Activated CD4-positive, alpha-beta memory T cell treated with anti-CD3 and anti-CD28 coated beads, Interleukin-2, amount 10 ng/mL, durations not matched to agents 7 days and 5 days (primary cell): ENCODE measurements at regions of chr2 and their contacts with region 1.

Region 1: DNA sequence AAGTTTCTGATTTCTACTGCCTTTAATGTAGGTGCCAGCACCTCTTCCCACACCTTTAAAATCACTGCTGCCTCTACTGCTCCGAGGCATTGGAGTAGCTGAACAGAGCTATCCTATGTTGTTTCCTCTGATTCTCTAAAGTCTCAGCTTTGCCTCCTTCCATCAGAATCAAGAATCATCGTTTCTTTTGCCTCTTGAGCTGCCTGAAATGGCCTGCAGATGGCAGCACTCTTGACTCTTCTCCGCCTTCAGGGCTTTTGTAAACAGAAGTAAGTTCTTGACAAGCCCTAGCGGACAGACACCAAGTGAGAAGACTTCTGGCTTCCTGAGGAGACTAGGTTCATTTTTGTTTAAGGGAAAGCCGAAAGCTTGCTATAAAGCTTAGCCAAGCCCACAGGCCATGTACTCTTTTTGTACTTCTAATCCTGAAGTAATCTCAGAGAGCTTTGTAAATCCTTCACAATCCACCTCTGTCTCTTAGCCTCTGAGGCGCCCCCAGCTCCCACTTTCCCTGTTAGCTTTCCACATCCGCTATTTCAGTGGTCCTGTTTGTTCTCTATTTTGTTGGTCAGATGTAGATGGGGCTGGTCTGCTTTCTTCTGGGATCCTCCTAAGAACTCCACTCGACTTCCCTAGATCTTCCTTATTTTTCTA is 48.4 kb downstream of the GTF3C3 start:
- DNase-seq: peak; percentile 76
- H3K4me3 Mint-ChIP-seq: no peak overlapping the region
- H3K27ac Mint-ChIP-seq: no peak overlapping the region
- H3K4me1 Mint-ChIP-seq: peaks cover 24% of the 10 kb centered on the region
- H3K27me3 Mint-ChIP-seq: peaks cover 3% of the 10 kb centered on the region

Region 2: GRCh38 chr2:196767101-196767500 is 16.0 kb after region 1 on chr2:
- CTCF ChIA-PET with region 1: interaction called, 13 read pairs
- POLR2A ChIA-PET with region 1: no interaction called
- DNase-seq: no peak
- H3K4me3 Mint-ChIP-seq: no peak overlapping the region
- H3K27ac Mint-ChIP-seq: no peak overlapping the region
- H3K4me1 Mint-ChIP-seq: no peaks in the 10 kb centered on the region
- H3K27me3 Mint-ChIP-seq: no peaks in the 10 kb centered on the region

Region 3: DNA sequence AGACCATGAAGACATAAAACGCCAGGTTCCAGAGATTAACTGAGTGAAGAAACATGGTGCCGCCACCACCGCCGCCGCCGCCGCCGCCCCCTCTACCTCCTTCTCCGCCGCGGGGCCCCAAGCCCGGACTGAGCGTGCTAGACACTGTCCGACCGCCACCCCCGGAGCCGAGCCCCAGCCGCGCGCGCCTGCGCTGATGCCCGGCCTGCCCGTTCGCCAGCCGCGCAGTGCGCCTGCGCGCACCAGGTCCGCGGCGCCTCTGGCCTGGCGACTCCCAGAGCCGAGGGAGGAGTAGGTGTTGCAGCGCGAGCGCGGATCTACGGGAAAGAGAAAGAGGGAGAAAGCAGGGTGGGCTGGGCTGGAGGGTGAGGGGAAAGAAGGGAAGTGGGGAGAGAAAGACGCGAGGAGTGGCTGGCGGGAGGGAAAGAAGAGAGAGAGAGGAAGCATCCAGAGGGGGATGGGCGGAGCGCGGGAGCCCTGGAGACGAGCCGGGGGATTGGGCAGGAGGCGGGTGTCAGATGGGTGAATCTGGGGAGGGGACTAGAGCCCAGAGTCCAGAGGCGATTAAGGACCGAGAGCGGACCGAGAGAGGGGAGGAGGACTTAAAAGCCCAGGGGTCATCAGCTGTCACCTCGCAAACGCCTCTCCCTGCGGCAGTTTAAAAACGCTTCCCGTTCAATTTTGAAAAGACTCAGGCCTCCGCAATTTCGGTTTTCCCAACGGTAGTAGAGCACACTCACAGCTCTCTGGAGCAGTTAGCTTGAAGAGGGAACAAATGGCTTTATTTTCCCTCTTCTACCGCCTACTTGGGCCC is 175.7 kb after region 1 on chr2 and contains the start of gene PGAP1:
- CTCF ChIA-PET with region 1: no interaction called
- POLR2A ChIA-PET with region 1: no interaction called
- DNase-seq: peak; percentile 89
- H3K4me3 Mint-ChIP-seq: peak within 1 kb of the TSS; percentile 93
- H3K27ac Mint-ChIP-seq: peak within 1 kb of the TSS; percentile 99
- H3K4me1 Mint-ChIP-seq: peaks cover 37% of the 10 kb centered on the region
- H3K27me3 Mint-ChIP-seq: no peaks in the 10 kb centered on the region
- total RNA-seq, gene PGAP1: 53.6 to 63.6 TPM